ENCODE measurements at regions of chr3 and their contacts with region 1.

Region 1: GRCh38 chr3:176872771-176873209 is 324.5 kb downstream of the TBL1XR1 start:
- DNase-seq: peak in 4 of 5 donors; percentile 42 to 56 (median 46)
- H3K4me3 ChIP-seq: no peak overlapping the region
- H3K4me3 Mint-ChIP-seq: no peak overlapping the region
- H3K27ac ChIP-seq: no peak overlapping the region
- H3K27ac Mint-ChIP-seq: peak overlapping the region in 1 of 7 donors; percentile 31
- H3K4me1 ChIP-seq: peaks cover 6% of the 10 kb centered on the region
- H3K4me1 Mint-ChIP-seq: peaks cover 4 to 7% (median 5%) of the 10 kb centered on the region in 4 donors
- H3K27me3 ChIP-seq: no peaks in the 10 kb centered on the region
- H3K27me3 Mint-ChIP-seq: peaks cover 2 to 5% of the 10 kb centered on the region in 2 donors

Region 2: DNA sequence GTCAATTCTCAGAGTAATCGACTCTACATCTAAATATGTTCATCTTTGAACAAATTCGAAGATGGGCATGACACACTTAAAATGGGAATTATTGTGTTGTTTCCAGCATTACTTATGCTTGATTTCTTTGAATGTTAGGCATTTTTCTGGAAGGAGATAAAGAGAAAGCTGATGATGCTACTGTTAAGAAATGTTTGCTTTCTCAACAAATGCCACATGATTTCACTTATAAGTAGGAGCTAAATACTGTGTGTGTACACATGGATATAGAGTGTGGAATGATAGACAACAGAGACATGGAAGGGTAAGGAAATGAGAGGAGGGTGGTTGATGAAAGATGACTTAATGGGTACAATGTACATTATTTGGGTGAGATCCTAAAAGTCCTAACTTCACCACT is 76.4 kb before region 1 on chr3:
- CTCF ChIA-PET with region 1: no interaction called
- POLR2A ChIA-PET with region 1: no interaction called
- intact Hi-C with region 1: no loop called
- DNase-seq: no peak
- H3K4me3 ChIP-seq: no peak overlapping the region
- H3K4me3 Mint-ChIP-seq: no peak overlapping the region
- H3K27ac ChIP-seq: no peak overlapping the region
- H3K27ac Mint-ChIP-seq: no peak overlapping the region
- H3K4me1 ChIP-seq: no peaks in the 10 kb centered on the region
- H3K4me1 Mint-ChIP-seq: no peaks in the 10 kb centered on the region
- H3K27me3 ChIP-seq: no peaks in the 10 kb centered on the region
- H3K27me3 Mint-ChIP-seq: peaks cover 2 to 7% of the 10 kb centered on the region in 2 donors

Region 3: GRCh38 chr3:176939022-176939817 is 66.4 kb after region 1 on chr3:
- CTCF ChIA-PET with region 1: interaction called, 36 read pairs
- POLR2A ChIA-PET with region 1: no interaction called
- intact Hi-C with region 1: loop called (anchors 1 kb)
- DNase-seq: peak; percentile 34 to 53 (median 44)
- H3K4me3 ChIP-seq: no peak overlapping the region
- H3K4me3 Mint-ChIP-seq: no peak overlapping the region
- H3K27ac ChIP-seq: no peak overlapping the region
- H3K27ac Mint-ChIP-seq: no peak overlapping the region
- H3K4me1 ChIP-seq: no peaks in the 10 kb centered on the region
- H3K4me1 Mint-ChIP-seq: no peaks in the 10 kb centered on the region
- H3K27me3 ChIP-seq: no peaks in the 10 kb centered on the region
- H3K27me3 Mint-ChIP-seq: peaks cover 9 to 10% of the 10 kb centered on the region in 2 donors

Region 4: DNA sequence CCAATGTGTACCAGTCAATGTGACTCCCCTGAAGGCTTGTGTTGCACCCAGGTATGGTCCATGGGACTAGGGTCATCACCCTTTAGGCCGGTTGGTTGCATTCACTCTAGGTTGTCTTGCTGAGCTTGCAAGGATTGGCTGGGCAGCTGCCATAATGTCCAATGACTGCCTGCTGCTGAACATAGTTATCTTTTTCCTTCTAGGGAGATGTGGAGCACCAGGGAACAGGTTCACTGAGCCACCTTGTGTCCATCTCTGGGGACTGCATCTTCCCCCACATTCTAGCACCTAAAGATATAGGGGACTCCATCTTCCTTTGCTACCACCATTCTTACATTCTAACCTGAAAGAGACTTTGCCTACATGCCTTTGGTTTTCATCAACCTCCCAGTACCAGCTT is 904.9 kb after region 1 on chr3:
- CTCF ChIA-PET with region 1: interaction called, 3 read pairs
- POLR2A ChIA-PET with region 1: no interaction called
- intact Hi-C with region 1: loop called (anchors 1 kb)
- DNase-seq: peak; percentile 8 to 44 (median 26)
- H3K4me3 ChIP-seq: no peak overlapping the region
- H3K4me3 Mint-ChIP-seq: peak overlapping the region in 2 of 8 donors; percentile 17 to 41
- H3K27ac ChIP-seq: no peak overlapping the region
- H3K27ac Mint-ChIP-seq: peak overlapping the region in 3 of 7 donors; percentile 52 to 73 (median 55)
- H3K4me1 ChIP-seq: peaks cover 22% of the 10 kb centered on the region
- H3K4me1 Mint-ChIP-seq: peaks cover 12 to 17% (median 15%) of the 10 kb centered on the region in 4 donors
- H3K27me3 ChIP-seq: no peaks in the 10 kb centered on the region
- H3K27me3 Mint-ChIP-seq: no peaks in the 10 kb centered on the region

Region 5: DNA sequence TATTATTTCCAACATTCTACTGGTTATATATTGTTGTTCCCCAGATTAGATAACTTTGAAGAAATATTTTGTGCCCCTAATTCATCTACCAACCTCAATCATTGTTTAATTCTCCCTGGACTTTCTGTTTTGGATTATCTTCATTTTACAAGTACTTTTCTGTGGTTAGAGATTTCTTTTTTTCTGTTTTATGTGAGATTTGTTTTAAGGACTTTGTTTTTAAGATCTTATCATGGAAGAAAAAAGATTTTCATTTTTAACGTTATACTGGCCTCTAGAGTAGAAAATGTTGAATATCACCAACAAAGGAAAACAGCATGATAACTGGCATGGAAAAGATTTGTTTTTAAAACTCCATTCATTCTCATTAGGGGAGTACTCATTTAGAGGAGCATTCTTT is 1452.5 kb after region 1 on chr3:
- CTCF ChIA-PET with region 1: interaction called, 3 read pairs
- POLR2A ChIA-PET with region 1: no interaction called
- intact Hi-C with region 1: loop called (anchors 2 kb)
- DNase-seq: peak in 1 of 5 donors; percentile 1
- H3K4me3 ChIP-seq: no peak overlapping the region
- H3K4me3 Mint-ChIP-seq: no peak overlapping the region
- H3K27ac ChIP-seq: no peak overlapping the region
- H3K27ac Mint-ChIP-seq: no peak overlapping the region
- H3K4me1 ChIP-seq: no peaks in the 10 kb centered on the region
- H3K4me1 Mint-ChIP-seq: no peaks in the 10 kb centered on the region
- H3K27me3 ChIP-seq: no peaks in the 10 kb centered on the region
- H3K27me3 Mint-ChIP-seq: no peaks in the 10 kb centered on the region

Region 6: GRCh38 chr3:178385280-178385952 is 1512.6 kb after region 1 on chr3:
- CTCF ChIA-PET with region 1: interaction called, 27 read pairs
- POLR2A ChIA-PET with region 1: no interaction called
- intact Hi-C with region 1: no loop called
- DNase-seq: peak in 4 of 5 donors; percentile 19 to 36 (median 20)
- H3K4me3 ChIP-seq: no peak overlapping the region
- H3K4me3 Mint-ChIP-seq: no peak overlapping the region
- H3K27ac ChIP-seq: no peak overlapping the region
- H3K27ac Mint-ChIP-seq: no peak overlapping the region
- H3K4me1 ChIP-seq: no peaks in the 10 kb centered on the region
- H3K4me1 Mint-ChIP-seq: no peaks in the 10 kb centered on the region
- H3K27me3 ChIP-seq: no peaks in the 10 kb centered on the region
- H3K27me3 Mint-ChIP-seq: peaks cover 8 to 9% of the 10 kb centered on the region in 2 donors

Measured in CD4-positive, alpha-beta memory T cell (primary cell).